ENCODE measurements at regions of chr1 and their contacts with region 1.

Region 1: DNA sequence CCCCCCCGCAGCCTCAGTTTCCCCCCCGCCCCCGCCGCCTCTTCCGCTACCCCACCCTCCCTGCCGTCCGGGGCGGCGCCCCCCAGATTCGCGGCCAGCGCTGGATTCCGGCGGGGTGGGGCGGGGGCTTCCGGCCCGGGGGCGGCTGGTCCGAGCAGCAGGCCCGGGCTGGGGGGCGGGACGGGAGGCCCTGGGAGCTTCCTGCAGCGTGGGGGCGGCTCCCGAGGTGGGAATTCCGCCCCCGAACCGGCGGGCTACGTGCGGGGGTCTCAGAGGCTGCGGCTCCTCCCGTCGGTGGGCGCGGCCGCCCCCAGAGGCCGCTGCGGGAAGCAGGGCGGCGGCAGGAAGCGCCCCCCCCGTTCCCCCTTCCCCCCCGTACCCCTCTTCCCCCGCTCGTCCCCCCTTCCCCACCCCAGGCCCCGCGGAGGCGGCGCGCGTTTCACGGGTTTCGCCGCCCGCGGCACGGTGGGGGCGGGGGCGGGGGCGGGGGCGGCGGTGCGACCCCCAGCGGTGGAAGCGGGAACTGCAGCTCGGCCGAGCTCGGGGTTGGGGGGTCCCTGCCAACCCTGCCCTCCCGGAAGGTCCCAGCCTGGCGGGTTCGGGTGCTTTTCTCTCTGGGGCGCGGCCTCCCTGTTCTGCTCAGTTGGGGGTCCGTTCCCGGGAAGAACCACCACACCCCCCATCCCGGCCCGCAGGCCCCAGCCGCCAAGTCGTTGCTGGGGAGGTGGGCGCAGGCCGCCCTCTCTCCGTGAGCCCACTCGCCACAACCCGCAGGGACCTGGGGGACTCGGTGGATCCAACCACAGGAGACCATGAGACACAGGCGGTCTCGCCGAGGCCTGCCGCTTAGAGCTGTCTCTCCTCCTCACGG is 76.3 kb downstream of the MORN1 start:
- DNase-seq: peak in 1 of 3 donors; percentile 75
- ATAC-seq: peak; percentile 1 to 55 (median 30)
- H3K4me3 ChIP-seq: peak overlapping the region; percentile 53 to 56 (median 56)
- H3K27ac ChIP-seq: peak overlapping the region; percentile 62 to 77 (median 64)
- H3K4me1 ChIP-seq: peaks cover 0 to 19% (median 2%) of the 10 kb centered on the region in 4 donors
- H3K27me3 ChIP-seq: no peaks in the 10 kb centered on the region
- CTCF ChIP-seq: peak; percentile 65 to 95 (median 92)
- POLR2A ChIP-seq: no peak

Region 2: GRCh38 chr1:2212542-2213491 is 102.2 kb before region 1 on chr1:
- intact Hi-C with region 1: loop called in 1 of 2 experiments (anchors 10 kb)
- DNase-seq: peak; percentile 73 to 79 (median 77)
- ATAC-seq: peak; percentile 20 to 28 (median 22)
- H3K4me3 ChIP-seq: peak overlapping the region in 2 of 3 donors; percentile 1 to 4
- H3K27ac ChIP-seq: peak overlapping the region; percentile 78 to 91 (median 80)
- H3K4me1 ChIP-seq: peaks cover 0 to 23% (median 12%) of the 10 kb centered on the region in 4 donors
- H3K27me3 ChIP-seq: no peaks in the 10 kb centered on the region
- CTCF ChIP-seq: peak in 2 of 4 donors; percentile 7 to 14
- POLR2A ChIP-seq: no peak

Region 3: DNA sequence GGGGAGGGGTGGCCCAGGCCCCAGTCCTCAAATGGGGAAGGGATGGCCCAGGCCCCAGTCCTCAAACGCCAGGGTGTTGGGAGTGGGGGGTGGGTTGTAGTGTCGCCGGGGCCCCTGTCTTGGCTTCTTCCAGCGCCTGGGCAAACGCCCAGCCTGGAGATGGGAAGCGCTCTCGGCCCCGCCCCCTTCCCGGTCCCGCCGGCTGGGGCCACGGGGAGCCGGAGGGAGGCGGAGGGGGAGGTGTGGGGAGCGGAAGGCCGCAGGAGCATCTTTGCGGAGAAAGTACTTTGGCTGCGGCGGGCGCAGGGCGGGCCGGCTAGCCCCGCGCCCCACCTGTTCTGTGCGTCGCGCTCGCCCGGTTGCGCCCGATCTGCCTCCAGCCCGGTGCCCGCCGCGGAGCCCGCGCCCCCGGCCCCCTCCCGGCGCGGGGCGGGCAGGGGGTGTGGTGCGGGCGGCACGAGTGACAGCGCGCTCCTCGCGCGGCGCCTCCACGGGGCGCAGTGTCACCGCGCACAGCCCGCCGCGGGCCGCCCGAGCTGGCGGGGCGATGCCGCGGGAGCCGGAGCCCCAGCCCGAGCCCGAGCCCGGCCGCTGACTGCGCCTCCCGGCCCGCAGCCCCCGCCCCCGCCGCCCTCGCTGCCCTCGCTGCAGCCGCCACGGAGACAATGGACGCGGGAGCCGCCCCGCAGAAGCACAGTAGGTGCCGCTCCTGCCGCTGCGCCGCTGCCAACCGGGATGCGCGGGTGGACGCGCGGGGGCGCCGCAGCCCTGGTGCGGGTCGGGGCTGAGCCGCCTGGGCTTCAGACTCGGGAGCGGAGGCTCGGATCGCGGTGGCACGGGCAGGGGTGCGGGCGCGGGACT is 128.5 kb after region 1 on chr1:
- intact Hi-C with region 1: no loop called
- DNase-seq: no peak
- ATAC-seq: peak in 1 of 4 donors; percentile 28
- H3K4me3 ChIP-seq: no peak overlapping the region
- H3K27ac ChIP-seq: no peak overlapping the region
- H3K4me1 ChIP-seq: no peaks in the 10 kb centered on the region
- H3K27me3 ChIP-seq: peaks cover 0 to 9% of the 10 kb centered on the region in 2 donors
- CTCF ChIP-seq: peak in 2 of 4 donors; percentile 15 to 25
- POLR2A ChIP-seq: no peak